ENCODE measurements at regions of chr12 and their contacts with region 1.

Region 1: DNA sequence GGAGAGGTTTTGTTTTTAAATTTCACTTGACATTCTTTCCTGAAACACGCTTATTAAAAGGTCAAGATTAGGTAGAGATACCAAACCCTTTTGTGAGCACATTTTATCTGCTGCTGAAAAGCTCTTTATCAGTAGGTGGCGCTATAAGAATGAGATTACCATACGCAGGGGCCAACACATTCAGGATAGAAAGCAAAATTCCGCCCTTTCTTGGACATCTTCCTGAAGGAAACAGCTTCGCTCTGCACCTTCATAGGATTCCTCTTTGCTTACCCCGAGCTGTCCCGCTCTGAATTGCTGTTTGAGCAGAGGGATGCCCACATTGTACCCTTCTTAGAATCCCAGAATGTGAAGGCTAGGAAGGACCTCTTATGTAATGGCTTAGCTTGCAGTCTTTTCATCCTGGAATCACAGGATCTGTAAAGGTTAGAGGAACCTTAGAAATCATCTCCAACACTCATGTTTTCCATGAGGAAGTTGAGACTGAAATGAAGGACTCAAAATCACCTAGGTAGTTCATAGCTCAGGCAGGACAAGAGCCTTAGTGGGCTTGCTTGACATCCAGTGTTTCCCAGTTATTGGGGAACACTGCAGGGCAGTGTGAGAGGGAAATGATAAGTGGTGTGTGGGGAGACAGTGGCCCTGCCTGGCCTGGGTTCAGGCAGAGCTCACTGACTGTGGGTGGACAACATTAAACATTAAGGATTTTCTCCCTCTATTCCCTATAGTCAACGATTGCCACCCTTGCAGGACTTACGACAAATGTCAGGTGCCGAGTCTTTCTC is 38.7 kb upstream of the CRY1 start:
- DNase-seq: no peak
- H3K4me3 ChIP-seq: no peak overlapping the region
- H3K27ac ChIP-seq: no peak overlapping the region
- H3K4me1 ChIP-seq: no peaks in the 10 kb centered on the region
- H3K27me3 ChIP-seq: peaks cover 0 to 5% of the 10 kb centered on the region in 2 donors
- CTCF ChIP-seq: peak; percentile 47 to 61

Region 2: DNA sequence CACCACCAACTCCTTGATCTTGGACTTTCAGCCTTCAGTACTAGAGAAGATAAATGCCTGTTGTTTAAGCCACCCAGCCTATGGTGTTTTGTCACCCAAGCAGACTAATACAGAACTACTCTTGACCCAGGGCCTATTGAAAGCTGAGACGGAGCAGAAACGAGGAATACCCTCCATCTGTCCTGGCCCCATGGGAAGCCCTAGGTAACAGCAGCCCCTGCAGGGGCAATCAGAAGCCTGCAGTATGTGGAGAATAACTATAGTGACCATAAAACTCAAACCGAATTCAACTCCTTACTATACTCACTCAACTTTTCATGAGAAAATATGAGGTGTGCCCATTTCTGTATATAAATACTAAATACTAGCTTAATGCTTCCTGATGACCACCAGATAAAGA is 1300.7 kb before region 1 on chr12:
- intact Hi-C with region 1: loop called (anchors 5 kb)
- DNase-seq: no peak
- H3K4me3 ChIP-seq: no peak overlapping the region
- H3K27ac ChIP-seq: no peak overlapping the region
- H3K4me1 ChIP-seq: peaks cover 0 to 25% (median 19%) of the 10 kb centered on the region in 4 donors
- H3K27me3 ChIP-seq: no peaks in the 10 kb centered on the region
- CTCF ChIP-seq: no peak

Region 3: DNA sequence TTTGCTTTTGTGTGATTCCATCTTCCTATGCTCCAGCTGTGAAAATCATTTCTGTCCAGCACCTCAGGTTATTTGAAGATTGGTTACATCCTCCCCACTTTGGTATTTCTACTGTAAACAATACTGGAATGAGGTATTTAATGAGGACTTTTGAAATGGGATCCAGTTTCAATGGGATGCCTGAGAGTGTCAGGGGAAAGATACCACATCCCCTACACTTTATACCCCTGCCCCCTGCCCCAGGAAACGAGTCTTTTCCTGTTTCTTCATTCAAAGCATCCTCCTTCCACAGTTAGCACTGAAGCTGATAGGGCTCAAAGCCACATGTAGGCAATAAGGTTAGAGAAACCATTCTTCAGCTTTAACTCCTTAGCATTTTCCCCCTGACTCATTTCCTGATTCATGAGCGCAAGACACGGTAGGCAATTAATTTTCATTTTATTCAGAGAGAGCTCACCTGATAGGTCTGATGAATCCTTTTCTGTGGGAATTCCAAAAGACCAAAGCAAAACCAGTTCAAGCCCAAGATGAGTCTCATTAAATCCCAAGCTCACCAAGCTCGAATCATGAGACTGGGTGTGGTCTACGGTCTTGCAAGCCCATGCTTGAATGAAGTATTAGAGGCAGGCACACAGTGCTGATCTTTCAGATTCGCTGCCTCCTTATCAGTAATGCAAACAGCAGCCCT is 104.9 kb after region 1 on chr12:
- intact Hi-C with region 1: no loop called
- DNase-seq: no peak
- H3K4me3 ChIP-seq: no peak overlapping the region
- H3K27ac ChIP-seq: no peak overlapping the region
- H3K4me1 ChIP-seq: no peaks in the 10 kb centered on the region
- H3K27me3 ChIP-seq: no peaks in the 10 kb centered on the region
- CTCF ChIP-seq: no peak

Region 4: DNA sequence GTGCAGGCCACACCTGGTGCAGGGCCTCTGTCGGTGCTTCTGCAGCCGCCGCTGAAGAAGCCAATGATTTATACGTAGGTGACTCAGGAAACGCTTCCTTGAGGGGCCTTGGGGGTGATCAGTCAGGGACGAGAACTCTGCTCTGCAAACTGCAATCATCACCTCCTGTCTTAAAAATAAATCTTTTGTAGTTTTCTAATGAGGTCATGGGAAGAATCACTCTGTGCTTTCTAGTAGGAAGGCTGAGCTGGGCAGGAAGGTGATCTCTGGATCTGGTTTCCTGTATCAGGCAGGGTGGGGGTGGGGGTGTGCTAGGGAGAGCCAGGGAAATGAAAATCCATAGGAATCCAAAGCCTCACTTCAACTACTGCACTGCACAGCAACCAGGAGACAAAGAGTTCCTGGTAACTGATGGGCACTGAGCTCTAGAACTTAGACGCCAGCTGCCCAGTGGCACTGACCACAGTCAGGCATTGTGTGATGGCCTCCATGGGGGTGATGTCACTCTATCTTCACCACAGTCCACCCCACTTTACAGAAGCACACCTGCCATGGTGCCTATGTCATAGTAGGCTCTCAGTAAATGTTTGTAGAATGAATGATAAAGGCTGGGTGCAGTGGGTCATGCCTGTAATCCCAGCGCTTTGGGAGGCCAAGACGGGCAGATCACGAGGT is 261.2 kb after region 1 on chr12:
- intact Hi-C with region 1: no loop called
- DNase-seq: no peak
- H3K4me3 ChIP-seq: no peak overlapping the region
- H3K27ac ChIP-seq: no peak overlapping the region
- H3K4me1 ChIP-seq: no peaks in the 10 kb centered on the region
- H3K27me3 ChIP-seq: no peaks in the 10 kb centered on the region
- CTCF ChIP-seq: no peak

Region 5: GRCh38 chr12:107607464-107608392 is 475.7 kb after region 1 on chr12:
- intact Hi-C with region 1: loop called (anchors 5 kb)
- DNase-seq: peak; percentile 64 to 72
- H3K4me3 ChIP-seq: no peak overlapping the region
- H3K27ac ChIP-seq: no peak overlapping the region
- H3K4me1 ChIP-seq: no peaks in the 10 kb centered on the region
- H3K27me3 ChIP-seq: peaks cover 0 to 6% of the 10 kb centered on the region in 2 donors
- CTCF ChIP-seq: peak; percentile 59 to 72